OCI-LY7 (cell line): ENCODE measurements at regions of chr2 and their contacts with region 1.

Region 1: DNA sequence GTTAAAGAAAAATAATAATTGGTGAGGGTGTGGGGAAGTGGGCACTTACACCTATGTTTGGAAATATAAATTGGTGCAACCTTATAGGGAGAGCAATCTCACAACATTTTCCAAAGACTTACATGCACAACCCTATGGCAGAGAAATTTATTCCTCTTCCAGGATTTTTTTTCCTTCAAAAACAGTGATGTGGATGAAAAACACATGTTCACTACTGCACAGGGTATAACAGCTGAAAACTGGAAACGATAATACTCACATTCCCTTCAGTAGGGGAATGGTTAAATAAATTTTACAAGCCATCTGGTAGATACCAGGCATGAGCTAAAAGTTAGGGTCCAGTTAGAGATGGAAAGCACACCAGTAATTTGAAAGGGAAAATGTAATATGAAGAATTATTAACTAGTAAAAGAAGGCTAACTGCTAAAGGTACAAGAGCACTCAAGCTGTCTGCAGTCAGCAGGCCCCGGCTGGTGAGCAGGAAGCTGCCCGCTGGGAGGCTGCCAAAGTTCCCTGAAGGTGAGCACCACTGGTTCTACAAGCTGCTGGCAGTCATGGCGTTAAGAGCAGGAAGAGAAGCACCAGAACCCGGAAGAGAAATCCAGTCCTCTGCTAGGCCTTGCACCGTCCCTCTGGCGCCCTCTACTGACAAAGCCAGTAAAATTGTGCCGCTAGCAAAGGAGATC is 28.4 kb upstream of the CASP8 start:
- DNase-seq: peak; percentile 96
- H3K4me3 ChIP-seq: peak overlapping the region; percentile 27
- H3K27ac ChIP-seq: peak overlapping the region; percentile 19
- H3K4me1 ChIP-seq: peaks cover 39% of the 10 kb centered on the region
- CTCF ChIP-seq: peak; percentile 97

Region 2: DNA sequence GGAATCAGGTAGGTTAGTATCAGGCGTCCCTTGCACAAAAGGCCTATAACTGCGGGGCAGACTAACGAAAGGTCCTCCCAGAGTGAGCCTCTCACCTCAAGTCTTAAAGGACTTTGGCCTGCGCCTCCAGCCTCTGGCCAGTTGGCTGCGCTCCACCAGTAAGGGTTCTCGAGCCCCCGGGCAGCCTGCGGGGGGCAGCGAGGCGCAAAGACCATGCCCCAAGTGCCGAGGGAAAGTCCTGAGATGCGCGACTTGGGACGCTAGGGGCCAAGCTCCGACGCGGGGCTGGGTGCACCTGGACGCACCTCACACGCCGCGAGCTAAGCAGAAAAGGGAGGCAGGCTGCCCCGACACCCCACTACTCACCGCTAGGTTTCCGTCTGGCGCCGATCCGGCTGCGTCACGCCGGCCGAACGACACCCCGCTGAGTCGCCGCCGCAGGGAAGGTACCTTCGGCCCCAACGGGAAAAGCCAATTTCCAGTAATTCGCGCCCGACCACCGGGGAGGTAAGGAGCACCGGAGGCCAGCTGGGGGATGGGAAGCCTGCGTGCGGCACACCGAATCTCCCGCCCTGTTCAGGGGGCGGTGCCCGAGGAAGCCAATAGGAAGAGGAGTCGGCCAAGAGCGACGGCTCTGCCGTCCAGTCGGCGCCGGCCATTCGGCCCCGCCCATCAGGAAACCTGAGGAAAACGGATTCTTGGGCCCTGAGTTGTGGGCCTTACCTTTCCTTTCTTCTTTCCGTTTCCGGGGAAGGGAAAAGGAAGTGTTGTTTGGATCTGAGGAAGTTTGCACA is 268.6 kb before region 1 on chr2 and contains the start of gene ORC2:
- CTCF ChIA-PET with region 1: interaction called, 6 read pairs
- POLR2A ChIA-PET with region 1: interaction called, 6 read pairs
- intact Hi-C with region 1: loop called (anchors 5 kb)
- DNase-seq: peak; percentile 95
- H3K4me3 ChIP-seq: peak within 1 kb of the TSS; percentile 76
- H3K27ac ChIP-seq: peak within 1 kb of the TSS; percentile 71
- H3K4me1 ChIP-seq: peaks cover 28% of the 10 kb centered on the region
- CTCF ChIP-seq: peak; percentile 83
- total RNA-seq, gene ORC2: 14.9 and 28.6 TPM in 2 replicates

Region 3: GRCh38 chr2:201021914-201022313 is 210.0 kb before region 1 on chr2:
- CTCF ChIA-PET with region 1: no interaction called
- POLR2A ChIA-PET with region 1: no interaction called
- intact Hi-C with region 1: no loop called
- DNase-seq: no peak
- H3K4me3 ChIP-seq: no peak overlapping the region
- H3K27ac ChIP-seq: no peak overlapping the region
- H3K4me1 ChIP-seq: no peaks in the 10 kb centered on the region
- CTCF ChIP-seq: no peak

Region 4: GRCh38 chr2:201176081-201176481 is 55.8 kb before region 1 on chr2:
- CTCF ChIA-PET with region 1: no interaction called
- POLR2A ChIA-PET with region 1: no interaction called
- intact Hi-C with region 1: loop called (anchors 2 kb)
- DNase-seq: no peak
- H3K4me3 ChIP-seq: no peak overlapping the region
- H3K27ac ChIP-seq: no peak overlapping the region
- H3K4me1 ChIP-seq: peaks cover 6% of the 10 kb centered on the region
- CTCF ChIP-seq: no peak

Region 5: DNA sequence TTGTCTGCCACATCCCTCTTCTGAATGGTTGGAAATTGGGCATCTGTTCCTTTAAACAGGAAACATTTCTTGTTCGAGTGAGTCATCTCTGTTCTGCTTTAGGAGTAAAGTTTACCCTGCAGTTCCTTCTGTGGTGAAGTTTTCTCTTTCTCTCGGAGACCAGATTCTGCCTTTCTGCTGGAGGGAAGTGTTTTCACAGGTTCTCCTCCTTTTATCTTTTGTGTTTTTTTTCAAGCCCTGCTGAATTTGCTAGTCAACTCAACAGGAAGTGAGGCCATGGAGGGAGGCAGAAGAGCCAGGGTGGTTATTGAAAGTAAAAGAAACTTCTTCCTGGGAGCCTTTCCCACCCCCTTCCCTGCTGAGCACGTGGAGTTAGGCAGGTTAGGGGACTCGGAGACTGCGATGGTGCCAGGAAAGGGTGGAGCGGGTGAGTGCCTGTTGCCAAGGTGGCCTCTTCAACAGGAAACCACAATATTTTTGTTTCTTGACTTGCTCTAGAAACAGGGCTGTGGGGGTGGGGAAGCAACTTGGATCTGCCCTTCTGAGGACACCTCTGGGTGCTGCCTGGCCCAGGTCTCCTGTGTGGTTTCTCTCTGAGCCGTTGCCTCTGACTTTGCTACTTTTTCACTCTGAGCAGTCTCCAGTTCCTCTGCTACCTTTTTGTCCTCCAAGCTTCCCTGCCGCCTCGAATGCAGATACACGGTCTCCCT is 26.2 kb after region 1 on chr2:
- CTCF ChIA-PET with region 1: interaction called, 7 read pairs
- POLR2A ChIA-PET with region 1: interaction called, 9 read pairs
- intact Hi-C with region 1: loop called (anchors 1 kb)
- DNase-seq: peak; percentile 84
- H3K4me3 ChIP-seq: peak overlapping the region; percentile 69
- H3K27ac ChIP-seq: peak overlapping the region; percentile 93
- H3K4me1 ChIP-seq: peaks cover 47% of the 10 kb centered on the region
- CTCF ChIP-seq: peak; percentile 18; the same call in 1 of the 2 replicates

Region 6: DNA sequence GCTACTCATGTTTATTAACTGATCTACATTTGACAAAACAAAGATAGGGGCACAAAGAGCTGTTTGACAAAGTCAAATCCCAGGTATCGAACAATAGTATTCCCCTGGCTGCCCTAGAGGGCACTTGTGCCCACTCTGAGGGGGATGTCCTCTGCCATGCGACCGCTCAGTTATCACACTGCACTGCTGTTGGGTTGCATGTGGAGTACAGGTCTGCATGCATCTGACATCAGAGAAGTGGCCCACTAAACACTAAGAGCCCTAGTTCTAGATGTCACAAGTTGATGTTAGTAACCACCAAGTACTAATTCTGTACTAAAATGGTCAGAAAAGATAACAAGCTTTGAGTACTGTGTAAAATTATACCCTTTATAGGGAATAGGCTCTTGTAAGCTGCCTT is 145.3 kb after region 1 on chr2:
- CTCF ChIA-PET with region 1: no interaction called
- POLR2A ChIA-PET with region 1: no interaction called
- intact Hi-C with region 1: no loop called
- DNase-seq: no peak
- H3K4me3 ChIP-seq: no peak overlapping the region
- H3K27ac ChIP-seq: no peak overlapping the region
- H3K4me1 ChIP-seq: no peaks in the 10 kb centered on the region
- CTCF ChIP-seq: no peak

Region 7: DNA sequence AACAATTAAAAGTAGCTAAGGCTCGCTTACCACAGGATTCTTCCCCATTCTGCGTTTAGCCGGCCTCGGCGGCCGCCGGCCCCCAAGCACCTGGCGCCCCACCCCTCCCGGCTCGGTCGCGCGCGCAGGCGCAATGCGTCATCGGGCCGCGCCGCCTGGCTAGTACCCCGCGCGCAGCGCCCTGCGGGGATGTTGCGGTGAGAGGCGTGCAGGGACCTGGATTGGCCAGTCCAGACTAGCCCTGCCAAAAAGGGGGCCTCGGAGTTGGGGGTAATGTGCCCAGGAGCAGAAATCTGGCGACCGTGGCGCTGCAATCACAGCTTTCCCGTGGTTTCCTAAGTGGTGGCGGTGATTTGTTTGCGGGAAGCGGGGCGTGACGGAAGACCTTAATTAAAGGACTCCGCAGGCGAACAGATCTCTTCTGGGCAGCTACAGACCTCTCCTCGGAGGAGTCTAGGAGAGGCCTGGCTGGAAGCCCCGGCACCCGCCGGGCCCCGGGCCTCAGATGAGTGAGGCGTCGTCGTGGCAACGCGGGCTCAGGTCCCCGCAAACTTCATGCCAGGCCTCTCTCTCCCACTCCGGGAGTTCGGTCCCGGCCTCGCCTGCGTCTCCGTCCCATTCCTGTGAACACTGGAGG is 410.8 kb after region 1 on chr2:
- CTCF ChIA-PET with region 1: no interaction called
- POLR2A ChIA-PET with region 1: interaction called, 3 read pairs
- intact Hi-C with region 1: loop called (anchors 2 kb)
- DNase-seq: peak; percentile 88
- H3K4me3 ChIP-seq: peak overlapping the region; percentile 97
- H3K27ac ChIP-seq: peak overlapping the region; percentile 75
- H3K4me1 ChIP-seq: peaks cover 22% of the 10 kb centered on the region
- CTCF ChIP-seq: no peak